ENCODE measurements at regions of chr17 and their contacts with region 1.

Region 1: GRCh38 chr17:35969558-35970380 is 11.5 kb downstream of the CCL16 start:
- DNase-seq: peak; percentile 86
- ATAC-seq: peak; percentile 72
- H3K4me3 Mint-ChIP-seq: no peak overlapping the region
- H3K27ac Mint-ChIP-seq: no peak overlapping the region
- H3K4me1 Mint-ChIP-seq: peaks cover 7% of the 10 kb centered on the region
- H3K27me3 Mint-ChIP-seq: peaks cover 6% of the 10 kb centered on the region

Region 2: GRCh38 chr17:35865412-35866340 is 104.1 kb before region 1 on chr17:
- CTCF ChIA-PET with region 1: interaction called, 10 read pairs
- POLR2A ChIA-PET with region 1: no interaction called
- DNase-seq: no peak
- ATAC-seq: no peak
- H3K4me3 Mint-ChIP-seq: no peak overlapping the region
- H3K27ac Mint-ChIP-seq: peak overlapping the region; percentile 16
- H3K4me1 Mint-ChIP-seq: peaks cover 38% of the 10 kb centered on the region
- H3K27me3 Mint-ChIP-seq: no peaks in the 10 kb centered on the region

Region 3: GRCh38 chr17:35953720-35954119 is 16.0 kb before region 1 on chr17:
- CTCF ChIA-PET with region 1: interaction called, 15 read pairs
- POLR2A ChIA-PET with region 1: no interaction called
- DNase-seq: no peak
- ATAC-seq: no peak
- H3K4me3 Mint-ChIP-seq: no peak overlapping the region
- H3K27ac Mint-ChIP-seq: no peak overlapping the region
- H3K4me1 Mint-ChIP-seq: no peaks in the 10 kb centered on the region
- H3K27me3 Mint-ChIP-seq: peaks cover 42% of the 10 kb centered on the region

Region 4: GRCh38 chr17:35981908-35982330 is 12.2 kb after region 1 on chr17:
- CTCF ChIA-PET with region 1: interaction called, 20 read pairs
- POLR2A ChIA-PET with region 1: no interaction called
- DNase-seq: no peak
- ATAC-seq: no peak
- H3K4me3 Mint-ChIP-seq: no peak overlapping the region
- H3K27ac Mint-ChIP-seq: no peak overlapping the region
- H3K4me1 Mint-ChIP-seq: no peaks in the 10 kb centered on the region
- H3K27me3 Mint-ChIP-seq: peaks cover 7% of the 10 kb centered on the region

Measured in activated CD8-positive, alpha-beta T cell treated with anti-CD3 and anti-CD28 coated beads, Interleukin-2, amount 10 ng/mL, durations not matched to agents 7 days and 5 days (primary cell).